B cell (primary cell): ENCODE measurements at regions of chr14 and their contacts with region 1.

Region 1: DNA sequence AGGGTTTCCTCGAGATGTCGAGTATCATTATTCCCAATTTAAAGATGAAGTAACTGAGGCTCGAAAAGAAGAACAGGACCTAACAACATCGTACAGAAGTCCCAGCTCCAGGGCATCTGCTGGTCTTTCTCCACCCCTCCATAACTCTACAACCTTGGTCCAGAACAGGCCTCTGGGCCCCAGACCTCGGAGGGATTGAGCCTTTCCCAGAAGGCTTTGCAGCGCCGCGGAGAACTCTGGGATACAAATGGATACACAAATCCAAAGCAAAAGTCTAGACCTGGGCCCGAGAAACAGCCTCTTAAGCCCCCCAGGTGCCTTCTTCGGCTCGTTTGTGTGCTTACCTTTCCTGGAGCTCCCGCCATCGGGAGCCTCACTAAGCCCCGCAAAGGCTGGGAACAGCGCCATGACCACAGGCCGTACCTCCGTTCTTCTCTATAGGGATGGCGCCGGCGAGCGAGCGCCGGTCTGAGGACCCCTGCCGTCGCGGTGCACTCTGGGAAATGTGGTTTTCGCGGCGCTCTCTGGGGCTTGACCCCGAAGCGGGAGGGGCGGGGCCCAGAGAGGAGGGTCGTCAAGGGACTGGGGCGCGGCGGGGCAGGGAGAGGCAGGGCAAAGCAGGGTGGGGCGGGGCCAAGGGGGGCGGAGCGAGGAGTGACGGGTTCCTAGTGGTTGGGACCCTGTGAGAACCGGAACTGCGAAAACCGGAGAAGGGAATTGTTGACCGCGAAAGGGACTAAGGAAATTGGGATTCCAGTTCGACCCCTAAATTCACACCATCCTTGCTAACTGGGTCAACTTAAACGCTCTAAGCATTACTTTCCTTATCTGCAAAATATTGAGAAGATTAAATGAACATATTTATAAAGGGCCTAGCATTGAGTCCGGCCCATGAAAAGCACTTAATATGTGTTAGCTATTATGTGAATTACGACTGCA is at the start of gene NRDE2:
- DNase-seq: peak; percentile 95
- ATAC-seq: peak; percentile 98
- H3K4me3 ChIP-seq: peak within 1 kb of the TSS; percentile 57 to 89 (median 79)
- H3K4me3 Mint-ChIP-seq: peak within 1 kb of the TSS; percentile 90
- H3K27ac ChIP-seq: peak within 1 kb of the TSS; percentile 67 to 77
- H3K27ac Mint-ChIP-seq: peak within 1 kb of the TSS; percentile 96
- H3K4me1 ChIP-seq: peaks cover 15 to 17% of the 10 kb centered on the region in 2 donors
- H3K4me1 Mint-ChIP-seq: peaks cover 22% of the 10 kb centered on the region
- H3K27me3 ChIP-seq: peaks cover 0 to 12% (median 4%) of the 10 kb centered on the region in 4 experiments
- H3K27me3 Mint-ChIP-seq: peaks cover 12% of the 10 kb centered on the region
- CTCF ChIP-seq: no peak
- total RNA-seq, gene NRDE2: 35.8 and 37.7 TPM in 2 replicates

Region 2: DNA sequence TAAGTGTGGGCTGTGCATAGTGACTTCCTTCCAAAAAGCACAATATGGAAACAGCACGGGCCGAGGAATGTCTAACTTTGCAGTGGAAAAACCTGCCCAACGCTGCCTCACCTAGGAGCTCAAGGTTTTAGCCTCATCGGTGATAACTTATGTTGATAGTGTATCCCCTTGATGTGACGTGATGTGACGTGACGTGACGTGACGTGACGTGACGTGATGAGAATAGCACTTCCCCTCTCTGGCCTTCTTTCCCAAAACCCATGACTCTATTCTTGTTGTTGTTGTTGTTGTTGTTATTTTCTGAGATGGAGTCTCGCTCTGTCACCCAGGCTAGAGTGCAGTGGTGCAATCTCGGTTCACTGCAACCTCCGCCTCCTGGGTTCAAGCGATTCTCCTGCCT is 205.5 kb before region 1 on chr14:
- CTCF ChIA-PET with region 1: no interaction called
- POLR2A ChIA-PET with region 1: no interaction called
- intact Hi-C with region 1: no loop called
- DNase-seq: no peak
- ATAC-seq: no peak
- H3K4me3 ChIP-seq: no peak overlapping the region
- H3K4me3 Mint-ChIP-seq: no peak overlapping the region
- H3K27ac ChIP-seq: no peak overlapping the region
- H3K27ac Mint-ChIP-seq: no peak overlapping the region
- H3K4me1 ChIP-seq: no peaks in the 10 kb centered on the region
- H3K4me1 Mint-ChIP-seq: no peaks in the 10 kb centered on the region
- H3K27me3 ChIP-seq: no peaks in the 10 kb centered on the region
- H3K27me3 Mint-ChIP-seq: peaks cover 25% of the 10 kb centered on the region
- CTCF ChIP-seq: no peak

Region 3: DNA sequence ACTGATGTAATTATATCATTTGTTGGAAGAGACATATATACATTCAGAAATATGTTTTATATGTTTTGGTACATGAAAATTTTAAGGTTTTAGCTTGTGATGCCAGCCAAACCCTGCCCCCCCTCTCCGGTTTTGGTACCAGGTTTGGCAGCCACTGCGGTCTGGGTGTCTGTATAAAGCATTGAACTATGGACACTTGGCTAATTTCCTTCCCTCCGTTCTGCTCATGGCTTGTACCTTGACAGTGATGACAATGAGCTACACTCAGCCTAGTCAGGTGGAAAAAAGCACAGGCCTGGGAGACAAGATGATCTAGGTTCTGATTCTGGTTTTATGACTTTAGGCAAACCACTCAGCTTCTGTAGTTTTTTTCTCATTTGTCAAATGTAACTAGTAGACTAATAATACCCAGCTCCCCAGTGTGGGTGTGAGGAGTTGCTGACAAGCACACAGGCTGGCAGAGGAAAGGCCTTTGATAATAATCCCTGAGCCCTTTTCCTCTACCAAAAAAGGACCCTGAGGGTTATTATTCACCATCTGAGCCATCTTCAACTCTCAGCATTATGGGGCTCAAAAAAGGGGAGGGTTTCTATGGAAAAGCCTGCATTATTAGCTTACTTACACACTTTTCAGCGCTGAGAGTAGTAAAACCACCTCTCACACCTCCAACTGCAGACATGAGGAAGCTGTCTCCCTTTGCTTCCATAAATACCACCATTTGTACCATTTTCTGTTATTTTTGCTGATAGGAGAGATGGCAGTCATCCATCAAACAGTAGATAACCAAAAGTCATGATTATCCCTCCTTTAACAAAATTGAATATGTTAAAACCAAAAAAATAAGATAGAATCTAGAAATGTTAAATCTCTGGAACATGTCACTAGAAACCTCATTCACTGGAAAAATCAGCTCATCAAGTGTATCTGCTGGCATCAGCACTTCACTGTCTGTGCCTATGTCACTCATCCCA is 151.7 kb before region 1 on chr14:
- CTCF ChIA-PET with region 1: no interaction called
- POLR2A ChIA-PET with region 1: no interaction called
- intact Hi-C with region 1: no loop called
- DNase-seq: no peak
- ATAC-seq: no peak
- H3K4me3 ChIP-seq: no peak overlapping the region
- H3K4me3 Mint-ChIP-seq: no peak overlapping the region
- H3K27ac ChIP-seq: no peak overlapping the region
- H3K27ac Mint-ChIP-seq: no peak overlapping the region
- H3K4me1 ChIP-seq: no peaks in the 10 kb centered on the region
- H3K4me1 Mint-ChIP-seq: no peaks in the 10 kb centered on the region
- H3K27me3 ChIP-seq: no peaks in the 10 kb centered on the region
- H3K27me3 Mint-ChIP-seq: peaks cover 8% of the 10 kb centered on the region
- CTCF ChIP-seq: no peak

Region 4: DNA sequence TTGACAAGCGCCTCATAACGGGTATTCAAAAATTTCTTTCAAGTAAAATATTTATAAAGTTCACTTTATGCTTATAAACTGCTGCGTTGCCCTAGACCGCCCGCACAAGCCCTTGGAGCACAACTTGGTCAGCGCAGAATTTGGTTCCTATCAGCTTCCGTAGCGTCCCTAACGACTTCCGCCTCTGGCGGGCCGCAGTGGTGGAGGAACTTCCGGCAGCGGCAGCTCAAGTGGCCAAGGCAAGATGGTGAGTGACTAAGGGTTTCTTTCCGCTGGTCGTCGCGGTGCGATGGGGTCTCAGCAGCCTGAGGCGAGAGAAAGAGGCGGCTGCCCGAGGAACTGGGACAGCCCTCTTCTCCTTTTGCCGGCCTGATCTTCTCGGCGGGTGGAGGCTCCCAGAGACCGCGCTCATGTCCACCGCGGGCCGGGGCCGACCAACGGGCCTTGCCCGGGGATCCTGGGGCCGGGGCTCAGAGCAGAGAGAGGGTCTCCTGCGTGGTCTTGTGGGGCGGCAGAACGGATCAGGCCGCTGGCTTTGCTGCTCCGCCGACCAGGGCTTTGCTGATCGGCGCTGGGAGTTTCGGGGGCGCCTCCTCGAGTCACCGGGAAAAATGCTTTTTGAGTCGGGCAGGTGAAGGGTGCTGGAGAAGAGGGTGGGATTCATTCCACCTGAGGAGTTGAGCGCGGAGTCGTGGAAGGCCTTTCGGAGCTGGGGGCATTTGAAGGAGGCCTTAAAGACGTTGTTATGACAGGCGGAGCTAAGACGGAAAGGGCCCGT is 75.2 kb before region 1 on chr14 and contains the start of gene PSMC1:
- CTCF ChIA-PET with region 1: no interaction called
- POLR2A ChIA-PET with region 1: no interaction called
- intact Hi-C with region 1: loop called (anchors 1 kb)
- DNase-seq: peak; percentile 89
- ATAC-seq: peak; percentile 94
- H3K4me3 ChIP-seq: peak within 1 kb of the TSS; percentile 75 to 92 (median 81)
- H3K4me3 Mint-ChIP-seq: peak within 1 kb of the TSS; percentile 99
- H3K27ac ChIP-seq: peak within 1 kb of the TSS; percentile 34 to 82
- H3K27ac Mint-ChIP-seq: peak within 1 kb of the TSS; percentile 97
- H3K4me1 ChIP-seq: peaks cover 14 to 25% of the 10 kb centered on the region in 2 donors
- H3K4me1 Mint-ChIP-seq: peaks cover 38% of the 10 kb centered on the region
- H3K27me3 ChIP-seq: peaks cover 0 to 5% (median 2%) of the 10 kb centered on the region in 4 experiments
- H3K27me3 Mint-ChIP-seq: peaks cover 3% of the 10 kb centered on the region
- CTCF ChIP-seq: no peak
- total RNA-seq, gene PSMC1: 50.2 and 51.6 TPM in 2 replicates